Brain microvascular endothelial cell (primary cell): ENCODE measurements at regions of chr18 and their contacts with region 1.

Region 1: DNA sequence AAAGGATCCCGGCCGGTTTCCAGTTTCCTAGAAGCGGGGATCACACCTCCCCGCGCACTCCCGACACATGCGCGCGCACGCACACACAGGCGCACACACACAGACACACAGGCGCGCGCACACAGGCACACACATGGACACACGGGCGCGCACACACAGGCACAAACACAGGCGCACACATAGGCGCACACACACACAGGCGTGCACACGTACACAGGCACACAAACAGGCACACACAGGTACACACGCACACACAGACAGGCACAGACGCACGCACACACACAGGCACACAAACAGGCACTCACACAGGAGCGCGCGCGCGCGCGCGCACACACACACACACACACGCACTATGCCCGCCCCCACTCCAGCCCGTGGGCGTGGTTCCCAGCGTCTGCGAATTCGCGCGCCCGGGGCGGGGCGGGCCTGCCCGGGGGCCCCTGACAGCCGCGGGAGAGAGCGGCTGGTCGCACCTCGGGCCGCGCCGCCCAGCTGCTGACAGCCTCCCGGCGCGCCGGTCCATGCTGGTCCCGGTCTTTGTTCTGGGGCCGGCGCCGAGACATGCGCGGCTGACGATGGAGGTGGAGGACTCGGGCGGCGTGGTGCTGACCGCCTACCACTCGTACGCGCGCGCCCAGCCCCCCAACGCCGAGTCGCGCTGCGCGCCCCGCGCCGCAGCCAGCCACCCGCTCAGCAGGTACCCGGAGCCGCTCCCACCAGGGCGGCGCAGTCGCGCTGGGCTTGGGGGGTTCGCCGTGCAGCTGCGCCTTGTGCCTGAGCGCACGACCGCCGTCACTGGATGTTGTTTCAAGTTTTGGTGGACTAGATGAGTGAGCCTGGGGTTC is at the start of gene ARHGAP28:
- DNase-seq: peak; percentile 87
- H3K4me3 ChIP-seq: peak within 1 kb of the TSS; percentile 68
- H3K27ac ChIP-seq: peak within 1 kb of the TSS; percentile 52
- H3K27me3 ChIP-seq: no peaks in the 10 kb centered on the region
- CTCF ChIP-seq: peak; percentile 31

Region 2: GRCh38 chr18:6624661-6625308 is 104.7 kb before region 1 on chr18:
- in situ Hi-C with region 1: loop called (anchors 25 kb)
- DNase-seq: peak; percentile 66
- H3K4me3 ChIP-seq: no peak overlapping the region
- H3K27ac ChIP-seq: peak overlapping the region; percentile 91
- H3K27me3 ChIP-seq: no peaks in the 10 kb centered on the region
- CTCF ChIP-seq: no peak

Region 3: DNA sequence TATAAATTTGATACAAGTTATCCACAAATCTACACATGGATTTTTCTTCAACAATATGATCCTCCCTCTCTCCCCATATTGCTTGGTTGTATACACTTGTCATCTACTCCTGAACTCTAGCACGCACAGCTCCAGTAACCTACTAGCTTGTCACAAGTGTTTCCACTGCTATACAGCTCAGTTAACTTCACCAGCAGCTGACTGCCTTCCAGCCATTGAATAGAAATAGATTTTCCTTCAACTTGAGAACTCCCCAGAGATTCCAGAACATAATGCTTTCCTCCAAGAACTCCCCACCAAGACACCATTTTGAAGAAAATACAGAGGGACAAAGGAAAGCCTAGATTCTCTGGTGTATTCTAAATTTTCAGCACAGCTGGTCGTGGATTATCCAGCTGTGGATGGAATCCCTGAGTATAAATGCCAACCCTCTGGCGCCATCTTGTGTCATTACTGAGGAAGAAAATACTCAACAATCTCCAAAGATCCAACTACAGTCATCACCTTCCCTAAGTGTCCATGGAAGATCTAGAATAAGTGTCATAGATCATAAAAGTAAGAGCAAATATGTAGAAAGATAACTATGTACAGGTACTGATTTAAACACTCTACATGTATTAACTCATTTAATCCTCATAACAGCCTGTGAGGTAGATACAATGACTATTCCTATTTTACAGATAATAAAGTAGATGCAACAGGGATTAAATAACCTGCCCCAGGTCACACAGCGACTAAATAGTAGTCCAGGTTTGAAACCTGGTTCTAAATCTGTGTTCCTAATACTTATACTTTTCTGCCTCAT is 156.7 kb after region 1 on chr18:
- in situ Hi-C with region 1: no loop called
- DNase-seq: peak; percentile 45
- H3K4me3 ChIP-seq: no peak overlapping the region
- H3K27ac ChIP-seq: no peak overlapping the region
- H3K27me3 ChIP-seq: no peaks in the 10 kb centered on the region
- CTCF ChIP-seq: peak; percentile 72